ENCODE measurements at regions of chr2 and their contacts with region 1.

Region 1: GRCh38 chr2:215811409-215812345 is 201.7 kb downstream of the MREG start:
- DNase-seq: peak; percentile 90
- ATAC-seq: peak; percentile 98
- H3K4me3 ChIP-seq: peak overlapping the region; percentile 30; the same call in 1 of the 2 replicates
- H3K27ac ChIP-seq: peak overlapping the region; percentile 45
- H3K4me1 ChIP-seq: peaks cover 19% of the 10 kb centered on the region
- H3K27me3 ChIP-seq: no peaks in the 10 kb centered on the region
- CTCF ChIP-seq: no peak
- EP300 ChIP-seq: peak in 1 of 2 experiments; percentile 87; a peak in 2 of 4 replicates
- POLR2A ChIP-seq: no peak
- RAD21 ChIP-seq: no peak

Region 2: DNA sequence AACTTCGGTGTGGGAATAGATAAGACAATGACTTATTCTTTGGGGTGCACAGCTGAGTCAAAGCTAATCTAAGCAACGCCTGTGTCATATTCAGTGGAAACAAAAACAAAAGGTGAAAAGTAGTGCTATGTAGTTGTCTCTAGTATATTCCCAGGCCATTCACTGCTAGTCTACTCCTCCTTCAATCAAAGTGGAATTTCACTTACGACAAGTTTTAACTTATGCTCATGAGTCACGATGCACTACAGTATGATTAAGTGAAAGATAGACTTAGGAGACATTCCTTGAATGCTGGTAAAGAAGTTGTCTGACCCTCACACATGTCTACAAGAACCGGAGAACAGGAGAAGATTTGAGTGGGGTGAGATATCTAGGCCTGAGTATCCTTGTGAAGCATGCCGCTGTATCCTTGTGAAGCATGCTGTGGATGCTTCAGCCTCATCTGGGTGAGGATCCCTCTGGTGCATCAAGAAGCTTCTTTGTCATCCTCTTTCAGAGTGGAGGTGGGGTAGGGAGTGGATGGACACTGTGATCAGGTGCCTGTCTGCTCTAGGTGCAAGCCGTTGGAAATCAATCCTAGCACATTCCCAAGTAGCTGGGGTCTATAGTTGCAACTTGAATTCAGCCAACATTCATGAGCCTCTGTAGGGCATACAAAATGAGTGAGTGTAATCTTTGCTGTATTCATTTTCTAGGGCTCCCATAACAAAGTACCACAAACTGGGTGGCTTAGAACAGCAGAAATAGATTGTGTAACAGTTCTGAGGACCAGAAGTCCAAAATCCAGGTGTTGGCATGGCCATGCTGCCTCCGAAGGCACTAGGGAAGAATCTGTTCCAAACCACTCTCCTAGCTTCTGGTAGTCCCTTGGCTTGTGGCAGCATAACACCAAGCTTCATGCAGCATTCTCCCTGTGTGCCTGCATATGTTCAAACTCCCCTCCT is 202.3 kb before region 1 on chr2:
- CTCF ChIA-PET with region 1: no interaction called
- POLR2A ChIA-PET with region 1: interaction called, 4 read pairs
- RAD21 ChIA-PET with region 1: no interaction called
- SMC1A ChIA-PET with region 1: interaction called, 3 read pairs
- in situ Hi-C with region 1: no loop called
- intact Hi-C with region 1: loop called (anchors 5 kb)
- DNase-seq: no peak
- ATAC-seq: no peak
- H3K4me3 ChIP-seq: no peak overlapping the region
- H3K27ac ChIP-seq: no peak overlapping the region
- H3K4me1 ChIP-seq: peaks cover 9% of the 10 kb centered on the region; the same call in 1 of the 2 replicates
- H3K27me3 ChIP-seq: no peaks in the 10 kb centered on the region
- CTCF ChIP-seq: no peak
- EP300 ChIP-seq: no peak
- POLR2A ChIP-seq: no peak
- RAD21 ChIP-seq: no peak

Region 3: DNA sequence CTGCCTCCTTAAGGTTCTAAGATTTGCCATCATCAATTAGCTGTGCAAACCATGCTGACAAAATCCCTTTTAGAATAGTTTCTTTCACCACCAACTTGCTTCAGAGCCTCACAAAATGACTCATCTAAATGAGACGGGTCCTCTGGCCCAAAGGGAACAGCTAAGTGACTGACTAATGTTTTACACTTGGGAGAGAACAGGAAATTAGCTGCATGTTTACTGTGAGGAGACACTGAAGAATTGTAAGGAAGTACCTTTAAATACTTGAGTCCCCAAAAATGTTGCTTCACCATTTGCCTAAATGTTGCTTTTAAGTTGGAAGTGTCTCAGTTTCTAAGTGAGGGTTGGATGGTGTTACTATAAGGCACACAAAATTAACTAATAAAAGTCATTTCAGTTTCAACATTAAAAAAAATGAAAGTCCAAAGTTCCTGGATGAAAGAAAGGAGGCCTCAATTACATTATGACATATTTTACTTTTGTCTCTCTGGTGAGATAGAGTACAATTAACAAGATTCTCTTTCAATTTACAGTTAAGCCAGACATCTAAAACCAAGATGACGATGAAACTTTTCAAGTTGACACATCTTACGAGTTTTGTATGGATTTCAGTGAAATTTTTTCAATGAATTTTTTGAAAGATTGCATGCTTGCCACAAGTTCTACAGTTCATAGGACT is 146.7 kb before region 1 on chr2:
- CTCF ChIA-PET with region 1: no interaction called
- POLR2A ChIA-PET with region 1: no interaction called
- RAD21 ChIA-PET with region 1: interaction called, 3 read pairs
- SMC1A ChIA-PET with region 1: interaction called, 8 read pairs
- in situ Hi-C with region 1: no loop called
- intact Hi-C with region 1: loop called (anchors 5 kb)
- DNase-seq: peak; percentile 63
- ATAC-seq: peak; percentile 93
- H3K4me3 ChIP-seq: no peak overlapping the region
- H3K27ac ChIP-seq: no peak overlapping the region
- H3K4me1 ChIP-seq: no peaks in the 10 kb centered on the region
- H3K27me3 ChIP-seq: no peaks in the 10 kb centered on the region; a peak in 1 of 4 replicates
- CTCF ChIP-seq: no peak
- EP300 ChIP-seq: peak in 1 of 2 experiments; percentile 62; a peak in 1 of 4 replicates
- POLR2A ChIP-seq: no peak
- RAD21 ChIP-seq: no peak

Region 4: DNA sequence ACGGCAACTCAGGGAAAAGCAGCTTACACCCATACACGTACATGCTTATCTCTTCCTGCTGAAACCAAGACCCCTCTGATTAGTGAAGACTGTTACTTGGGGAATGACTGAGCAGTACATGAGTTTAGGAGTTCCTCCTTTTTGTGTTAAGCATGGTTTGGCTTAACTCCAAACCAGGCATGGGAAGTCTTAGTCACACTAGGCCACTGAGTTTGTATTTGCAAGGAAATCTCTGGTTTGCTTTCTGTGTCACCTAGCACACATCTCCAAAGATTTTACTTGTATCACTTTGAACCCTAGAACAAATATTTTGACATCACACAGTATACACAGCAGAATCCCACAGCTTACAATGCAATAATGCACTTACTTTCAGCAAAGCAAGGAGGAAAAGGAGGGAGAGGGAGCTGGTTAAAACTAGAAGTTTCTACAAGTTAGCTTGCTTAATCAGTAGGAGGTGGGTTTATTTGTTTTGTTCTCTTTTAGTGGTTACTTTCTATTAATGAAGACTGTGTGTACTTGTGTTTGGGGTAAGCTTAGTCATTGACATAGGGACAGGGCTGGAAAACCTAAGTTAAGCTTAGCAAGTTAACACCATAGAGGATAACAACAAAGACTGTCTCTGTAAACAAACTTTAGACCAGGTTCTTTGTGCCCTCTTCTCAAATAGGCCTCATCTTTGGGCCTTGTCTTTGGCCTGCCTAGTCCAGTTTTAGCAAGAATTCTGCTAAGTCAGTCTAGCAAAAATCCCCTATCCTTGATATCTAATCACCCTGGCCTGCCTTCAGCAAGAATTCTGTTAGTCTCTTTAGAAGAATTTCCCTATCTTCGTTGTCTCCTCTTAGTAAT is 17.7 kb before region 1 on chr2:
- CTCF ChIA-PET with region 1: interaction called, 14 read pairs
- POLR2A ChIA-PET with region 1: interaction called, 4 read pairs
- RAD21 ChIA-PET with region 1: interaction called, 17 read pairs
- SMC1A ChIA-PET with region 1: interaction called, 36 read pairs
- in situ Hi-C with region 1: no loop called
- intact Hi-C with region 1: no loop called
- DNase-seq: peak; percentile 56
- ATAC-seq: peak; percentile 67
- H3K4me3 ChIP-seq: no peak overlapping the region
- H3K27ac ChIP-seq: no peak overlapping the region
- H3K4me1 ChIP-seq: peaks cover 5% of the 10 kb centered on the region; the same call in 1 of the 2 replicates
- H3K27me3 ChIP-seq: no peaks in the 10 kb centered on the region
- CTCF ChIP-seq: no peak
- EP300 ChIP-seq: no peak
- POLR2A ChIP-seq: no peak
- RAD21 ChIP-seq: no peak

Region 5: GRCh38 chr2:215828517-215829184 is 17.0 kb after region 1 on chr2:
- CTCF ChIA-PET with region 1: interaction called, 53 read pairs
- POLR2A ChIA-PET with region 1: interaction called, 5 read pairs
- RAD21 ChIA-PET with region 1: interaction called, 11 read pairs
- SMC1A ChIA-PET with region 1: interaction called, 51 read pairs
- in situ Hi-C with region 1: no loop called
- intact Hi-C with region 1: no loop called
- DNase-seq: no peak
- ATAC-seq: peak; percentile 80
- H3K4me3 ChIP-seq: no peak overlapping the region
- H3K27ac ChIP-seq: no peak overlapping the region
- H3K4me1 ChIP-seq: peaks cover 5% of the 10 kb centered on the region
- H3K27me3 ChIP-seq: no peaks in the 10 kb centered on the region
- CTCF ChIP-seq: peak; percentile 54 to 73 (median 68)
- EP300 ChIP-seq: no peak
- POLR2A ChIP-seq: no peak
- RAD21 ChIP-seq: peak; percentile 80

Region 6: GRCh38 chr2:215843579-215843978 is 31.9 kb after region 1 on chr2:
- CTCF ChIA-PET with region 1: interaction called, 9 read pairs
- POLR2A ChIA-PET with region 1: interaction called, 9 read pairs
- RAD21 ChIA-PET with region 1: interaction called, 22 read pairs
- SMC1A ChIA-PET with region 1: interaction called, 37 read pairs
- in situ Hi-C with region 1: no loop called
- intact Hi-C with region 1: loop called (anchors 1 kb)
- DNase-seq: no peak
- ATAC-seq: no peak
- H3K4me3 ChIP-seq: no peak overlapping the region
- H3K27ac ChIP-seq: no peak overlapping the region
- H3K4me1 ChIP-seq: peaks cover 42% of the 10 kb centered on the region
- H3K27me3 ChIP-seq: no peaks in the 10 kb centered on the region
- CTCF ChIP-seq: no peak
- EP300 ChIP-seq: no peak
- POLR2A ChIP-seq: no peak
- RAD21 ChIP-seq: no peak

Region 7: GRCh38 chr2:215880970-215881369 is 69.3 kb after region 1 on chr2:
- CTCF ChIA-PET with region 1: interaction called, 4 read pairs
- POLR2A ChIA-PET with region 1: no interaction called
- RAD21 ChIA-PET with region 1: interaction called, 10 read pairs
- SMC1A ChIA-PET with region 1: interaction called, 16 read pairs
- in situ Hi-C with region 1: no loop called
- intact Hi-C with region 1: no loop called
- DNase-seq: peak; percentile 38
- ATAC-seq: peak; percentile 82
- H3K4me3 ChIP-seq: no peak overlapping the region
- H3K27ac ChIP-seq: no peak overlapping the region
- H3K4me1 ChIP-seq: peaks cover 15% of the 10 kb centered on the region
- H3K27me3 ChIP-seq: no peaks in the 10 kb centered on the region
- CTCF ChIP-seq: no peak
- EP300 ChIP-seq: no peak
- POLR2A ChIP-seq: no peak
- RAD21 ChIP-seq: no peak

Region 8: GRCh38 chr2:215942194-215942593 is 130.5 kb after region 1 on chr2:
- CTCF ChIA-PET with region 1: no interaction called
- POLR2A ChIA-PET with region 1: no interaction called
- RAD21 ChIA-PET with region 1: no interaction called
- SMC1A ChIA-PET with region 1: no interaction called
- in situ Hi-C with region 1: no loop called
- intact Hi-C with region 1: no loop called
- DNase-seq: no peak
- ATAC-seq: peak; percentile 47; the same call in 1 of the 3 replicates
- H3K4me3 ChIP-seq: no peak overlapping the region
- H3K27ac ChIP-seq: no peak overlapping the region
- H3K4me1 ChIP-seq: no peaks in the 10 kb centered on the region
- H3K27me3 ChIP-seq: no peaks in the 10 kb centered on the region
- CTCF ChIP-seq: no peak
- EP300 ChIP-seq: no peak
- POLR2A ChIP-seq: no peak
- RAD21 ChIP-seq: no peak

Measured in GM12878 (cell line).